Lower leg skin (tissue), 4 donors: ENCODE measurements at regions of chr10 and their contacts with region 1.

Region 1: DNA sequence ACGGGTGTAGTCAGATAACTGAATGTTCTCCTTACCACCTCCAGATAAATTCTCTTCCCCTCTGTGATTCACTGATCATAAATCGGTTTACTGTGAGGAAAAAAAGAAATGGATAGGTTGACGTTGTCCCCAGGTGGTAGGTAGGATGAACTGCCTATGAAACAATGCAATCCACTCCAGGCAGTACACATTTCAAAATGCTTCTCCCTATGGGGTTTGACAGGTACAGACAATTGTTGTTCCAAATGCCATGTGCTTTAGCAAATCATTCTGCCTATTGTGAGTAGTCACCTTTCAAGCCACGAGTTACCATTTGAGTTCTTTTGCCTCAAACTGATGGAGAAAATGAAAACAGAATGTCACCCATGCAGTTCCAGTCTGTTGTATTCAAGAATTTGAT is 21.8 kb downstream of the VIM start:
- DNase-seq: no peak
- H3K4me3 ChIP-seq: no peak overlapping the region
- CTCF ChIP-seq: no peak
- POLR2A ChIP-seq: no peak

Region 2: DNA sequence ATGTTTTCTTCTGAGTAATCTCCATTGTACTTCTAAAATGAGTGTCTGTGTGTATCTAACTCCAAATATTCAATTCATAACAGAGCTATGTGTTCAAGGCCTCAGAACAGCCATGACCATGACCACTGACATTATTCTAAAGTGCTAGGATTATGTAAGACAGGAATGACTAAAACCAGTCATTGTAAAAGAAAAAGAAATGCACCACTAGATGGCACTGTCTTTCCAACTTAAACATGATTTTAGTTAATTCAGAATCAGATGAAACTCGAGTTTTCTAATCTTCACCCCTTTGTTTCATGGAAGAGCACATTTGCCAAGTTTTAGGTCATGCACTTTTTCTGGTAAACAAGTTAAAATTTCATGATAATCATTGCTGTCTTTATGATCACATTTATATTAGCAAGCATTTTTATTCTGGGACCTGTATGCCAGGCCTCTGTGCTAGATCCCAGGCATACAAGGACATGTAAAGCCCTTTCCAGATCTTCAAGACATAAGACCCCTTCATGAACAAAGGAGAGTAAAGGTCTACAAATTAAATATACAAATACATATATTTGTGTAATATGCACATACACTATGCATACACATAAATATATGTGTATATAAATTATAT is 406.5 kb before region 1 on chr10:
- intact Hi-C with region 1: loop called (anchors 5 kb)
- DNase-seq: no peak
- H3K4me3 ChIP-seq: no peak overlapping the region
- CTCF ChIP-seq: no peak
- POLR2A ChIP-seq: no peak

Region 3: GRCh38 chr10:18501198-18501597 is 1251.4 kb after region 1 on chr10:
- intact Hi-C with region 1: no loop called
- DNase-seq: no peak
- H3K4me3 ChIP-seq: no peak overlapping the region
- CTCF ChIP-seq: no peak
- POLR2A ChIP-seq: no peak